ENCODE measurements at regions of chr3 and their contacts with region 1.

Region 1: DNA sequence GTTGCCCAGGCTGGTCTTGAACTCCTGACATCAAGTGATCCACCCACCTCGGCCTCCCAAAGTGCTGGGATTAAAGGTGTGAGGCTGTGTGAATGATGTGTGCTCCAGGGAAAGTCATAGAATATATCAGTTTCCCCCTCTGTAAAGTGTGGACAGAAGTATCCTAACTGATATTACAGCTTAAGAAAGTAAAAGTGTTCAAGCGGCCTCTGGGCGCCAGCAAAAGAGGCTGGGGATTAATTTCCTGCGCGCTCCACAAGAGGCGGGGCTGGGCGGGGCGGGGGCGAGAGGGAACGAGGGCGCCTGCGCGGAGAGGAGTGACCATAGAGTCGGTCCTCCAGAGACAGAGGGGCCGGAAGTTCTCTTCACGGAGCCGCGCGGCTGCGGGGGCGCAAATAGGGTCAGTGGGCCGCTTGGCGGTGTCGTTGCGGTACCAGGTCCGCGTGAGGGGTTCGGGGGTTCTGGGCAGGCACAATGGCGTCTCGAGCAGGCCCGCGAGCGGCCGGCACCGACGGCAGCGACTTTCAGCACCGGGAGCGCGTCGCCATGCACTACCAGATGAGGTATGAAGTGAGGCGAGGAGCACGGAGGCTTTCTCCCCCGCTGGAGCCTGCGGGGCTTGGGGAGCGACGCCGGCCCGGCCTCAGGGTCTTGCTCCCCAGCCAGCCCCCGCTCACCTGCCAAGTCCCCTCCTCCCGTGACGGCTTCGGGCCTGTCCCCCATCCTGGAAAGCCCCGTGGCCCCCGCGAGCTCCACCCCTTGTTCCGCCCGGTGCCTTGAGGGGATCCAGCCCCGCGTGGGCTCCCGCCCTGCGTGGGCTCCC is at the start of gene JAGN1:
- DNase-seq: peak; percentile 82 to 90 (median 87)
- H3K4me3 ChIP-seq: peak within 1 kb of the TSS; percentile 66 to 100 (median 96)
- H3K27ac ChIP-seq: peak within 1 kb of the TSS; percentile 35 to 98 (median 92)
- H3K27me3 ChIP-seq: no peaks in the 10 kb centered on the region
- CTCF ChIP-seq: peak in 43 of 56 donors; percentile 2 to 61 (median 39)
- total RNA-seq, gene JAGN1: 11.2 to 25.9 (median 17.3) TPM

Region 2: DNA sequence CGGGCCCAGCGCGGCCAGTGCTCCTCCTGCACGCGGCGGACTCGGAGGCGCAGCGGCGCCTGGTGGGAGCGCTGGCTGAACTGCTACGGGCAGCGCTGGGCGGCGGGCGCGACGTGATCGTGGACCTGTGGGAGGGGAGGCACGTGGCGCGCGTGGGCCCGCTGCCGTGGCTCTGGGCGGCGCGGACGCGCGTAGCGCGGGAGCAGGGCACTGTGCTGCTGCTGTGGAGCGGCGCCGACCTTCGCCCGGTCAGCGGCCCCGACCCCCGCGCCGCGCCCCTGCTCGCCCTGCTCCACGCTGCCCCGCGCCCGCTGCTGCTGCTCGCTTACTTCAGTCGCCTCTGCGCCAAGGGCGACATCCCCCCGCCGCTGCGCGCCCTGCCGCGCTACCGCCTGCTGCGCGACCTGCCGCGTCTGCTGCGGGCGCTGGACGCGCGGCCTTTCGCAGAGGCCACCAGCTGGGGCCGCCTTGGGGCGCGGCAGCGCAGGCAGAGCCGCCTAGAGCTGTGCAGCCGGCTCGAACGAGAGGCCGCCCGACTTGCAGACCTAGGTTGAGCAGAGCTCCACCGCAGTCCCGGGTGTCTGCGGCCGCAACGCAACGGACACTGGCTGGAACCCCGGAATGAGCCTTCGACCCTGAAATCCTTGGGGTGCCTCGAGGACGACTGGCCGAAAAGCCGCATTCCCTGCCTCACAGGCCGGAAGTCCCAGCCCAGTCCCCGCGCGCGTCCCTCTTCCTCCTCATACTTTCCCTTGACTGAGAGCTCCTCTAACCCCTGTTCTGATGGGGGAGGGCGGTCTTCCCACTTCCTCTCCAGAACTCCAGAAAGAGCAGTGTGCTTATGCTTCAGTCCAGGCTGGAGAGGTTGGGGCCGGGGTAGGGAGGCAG is 25.0 kb after region 1 on chr3:
- intact Hi-C with region 1: loop called in 1 of 2 experiments (anchors 2 kb)
- DNase-seq: peak; percentile 44 to 84 (median 71)
- H3K4me3 ChIP-seq: peak overlapping the region; percentile 51 to 84 (median 71)
- H3K27ac ChIP-seq: peak overlapping the region in 57 of 59 donors; percentile 27 to 95 (median 83)
- H3K27me3 ChIP-seq: no peaks in the 10 kb centered on the region
- CTCF ChIP-seq: peak in 48 of 56 donors; percentile 9 to 60 (median 38)

Region 3: GRCh38 chr3:9946112-9947024 is 55.9 kb after region 1 on chr3:
- intact Hi-C with region 1: loop called in 1 of 2 experiments (anchors 2 kb)
- DNase-seq: peak; percentile 70 to 88 (median 76)
- H3K4me3 ChIP-seq: peak overlapping the region; percentile 42 to 81 (median 64)
- H3K27ac ChIP-seq: peak overlapping the region; percentile 46 to 95 (median 87)
- H3K27me3 ChIP-seq: no peaks in the 10 kb centered on the region
- CTCF ChIP-seq: peak; percentile 19 to 86 (median 74)